ENCODE measurements at regions of chr4 and their contacts with region 1.

Region 1: DNA sequence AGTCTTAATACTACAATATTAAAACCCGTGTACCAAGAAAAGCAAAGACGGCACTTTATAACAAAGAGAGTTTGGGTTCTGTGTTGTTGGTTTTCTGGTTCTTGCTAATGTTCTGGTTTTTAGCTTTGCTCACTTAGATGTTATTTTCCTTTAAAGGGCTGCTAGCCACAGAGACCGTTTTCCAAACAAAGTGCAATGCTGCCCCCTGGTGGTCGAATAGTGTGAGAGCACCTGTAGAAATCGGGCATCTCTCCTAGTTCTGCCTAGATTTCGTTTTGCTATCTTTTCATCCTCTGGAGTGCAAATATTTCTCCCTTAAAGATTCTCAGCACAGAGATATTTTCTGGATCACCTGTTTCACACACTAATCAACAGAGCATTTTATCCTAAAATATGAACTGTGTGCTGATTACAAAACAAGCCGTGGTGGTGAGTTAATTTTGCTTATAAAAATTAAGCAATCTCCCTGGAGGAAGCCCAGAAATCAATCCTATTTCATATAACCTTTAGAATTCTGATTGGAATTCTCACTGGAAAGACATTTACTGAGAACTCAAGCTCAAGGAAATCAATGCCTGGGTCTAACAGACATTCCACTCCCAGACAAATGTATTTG is 334.5 kb upstream of the NOCT start:
- DNase-seq: peak; percentile 71
- H3K4me3 Mint-ChIP-seq: no peak overlapping the region
- H3K27ac Mint-ChIP-seq: no peak overlapping the region
- H3K4me1 Mint-ChIP-seq: peaks cover 23% of the 10 kb centered on the region
- H3K27me3 Mint-ChIP-seq: no peaks in the 10 kb centered on the region
- CTCF ChIP-seq: peak; percentile 77

Region 2: GRCh38 chr4:138330531-138330930 is 350.6 kb before region 1 on chr4:
- CTCF ChIA-PET with region 1: no interaction called
- intact Hi-C with region 1: no loop called
- DNase-seq: no peak
- H3K4me3 Mint-ChIP-seq: no peak overlapping the region
- H3K27ac Mint-ChIP-seq: no peak overlapping the region
- H3K4me1 Mint-ChIP-seq: peaks cover 32% of the 10 kb centered on the region
- H3K27me3 Mint-ChIP-seq: no peaks in the 10 kb centered on the region
- CTCF ChIP-seq: no peak

Region 3: DNA sequence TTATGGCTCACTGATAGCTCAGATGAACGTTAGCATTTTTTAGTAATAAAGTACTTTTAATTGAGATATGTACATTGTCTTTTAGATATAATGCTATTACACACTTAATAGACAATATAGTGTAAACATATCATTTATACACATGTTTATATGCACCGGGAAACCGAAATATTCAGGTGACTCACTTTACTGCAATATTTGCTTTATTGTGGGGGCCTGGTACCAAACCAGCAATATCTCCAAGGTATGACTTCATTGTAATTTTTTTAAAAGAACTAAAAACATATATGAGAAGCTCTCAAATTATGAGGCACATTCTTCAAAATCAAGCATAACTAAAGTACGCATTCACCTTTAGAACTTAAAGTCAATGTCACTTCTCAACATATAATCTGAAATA is 207.8 kb before region 1 on chr4:
- CTCF ChIA-PET with region 1: no interaction called
- intact Hi-C with region 1: no loop called
- DNase-seq: no peak
- H3K4me3 Mint-ChIP-seq: no peak overlapping the region
- H3K27ac Mint-ChIP-seq: no peak overlapping the region
- H3K4me1 Mint-ChIP-seq: no peaks in the 10 kb centered on the region
- H3K27me3 Mint-ChIP-seq: no peaks in the 10 kb centered on the region
- CTCF ChIP-seq: no peak

Region 4: DNA sequence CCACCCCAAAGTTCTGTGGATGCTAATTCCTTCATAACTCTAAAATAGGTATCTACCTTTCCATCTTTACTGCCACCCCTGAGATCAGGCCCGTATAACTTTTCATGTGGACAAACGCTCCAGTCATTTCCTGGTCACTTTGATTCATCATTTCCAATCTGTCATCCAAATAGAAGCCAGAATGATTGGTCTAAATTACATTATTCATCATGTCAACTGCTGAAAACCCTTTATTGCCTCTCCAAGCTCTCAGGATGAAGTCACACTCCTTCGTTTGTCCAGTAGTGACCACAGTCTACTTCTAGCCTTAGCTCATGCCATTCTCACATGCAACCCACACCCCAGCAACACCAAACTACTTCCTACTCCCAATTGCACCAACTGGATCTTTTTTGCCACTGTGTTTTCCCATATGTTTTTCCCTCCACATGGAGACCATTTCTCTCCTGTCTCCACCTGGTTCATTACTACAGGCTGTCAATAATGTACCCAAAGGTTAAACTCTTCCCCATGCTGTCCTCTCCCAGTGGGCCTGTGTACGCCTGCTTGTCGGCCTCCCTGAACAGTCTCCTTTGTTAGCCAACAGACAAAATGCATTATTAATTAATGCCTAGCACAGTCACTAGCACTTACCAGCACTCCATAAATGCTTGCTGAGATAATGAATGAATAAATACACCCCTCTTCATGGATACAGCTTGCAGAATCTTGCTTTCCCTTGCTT is 48.1 kb before region 1 on chr4:
- CTCF ChIA-PET with region 1: no interaction called
- intact Hi-C with region 1: no loop called
- DNase-seq: no peak
- H3K4me3 Mint-ChIP-seq: no peak overlapping the region
- H3K27ac Mint-ChIP-seq: no peak overlapping the region
- H3K4me1 Mint-ChIP-seq: no peaks in the 10 kb centered on the region
- H3K27me3 Mint-ChIP-seq: no peaks in the 10 kb centered on the region
- CTCF ChIP-seq: no peak

Region 5: GRCh38 chr4:138870737-138871554 is 189.8 kb after region 1 on chr4:
- CTCF ChIA-PET with region 1: interaction called, 3 read pairs
- intact Hi-C with region 1: loop called (anchors 5 kb)
- DNase-seq: peak; percentile 63
- H3K4me3 Mint-ChIP-seq: no peak overlapping the region
- H3K27ac Mint-ChIP-seq: no peak overlapping the region
- H3K4me1 Mint-ChIP-seq: peaks cover 7% of the 10 kb centered on the region
- H3K27me3 Mint-ChIP-seq: peaks cover 13% of the 10 kb centered on the region
- CTCF ChIP-seq: peak; percentile 49

Measured in Calu3 (cell line).